Panc1 (cell line): ENCODE measurements at regions of chr5 and their contacts with region 1.

Region 1: DNA sequence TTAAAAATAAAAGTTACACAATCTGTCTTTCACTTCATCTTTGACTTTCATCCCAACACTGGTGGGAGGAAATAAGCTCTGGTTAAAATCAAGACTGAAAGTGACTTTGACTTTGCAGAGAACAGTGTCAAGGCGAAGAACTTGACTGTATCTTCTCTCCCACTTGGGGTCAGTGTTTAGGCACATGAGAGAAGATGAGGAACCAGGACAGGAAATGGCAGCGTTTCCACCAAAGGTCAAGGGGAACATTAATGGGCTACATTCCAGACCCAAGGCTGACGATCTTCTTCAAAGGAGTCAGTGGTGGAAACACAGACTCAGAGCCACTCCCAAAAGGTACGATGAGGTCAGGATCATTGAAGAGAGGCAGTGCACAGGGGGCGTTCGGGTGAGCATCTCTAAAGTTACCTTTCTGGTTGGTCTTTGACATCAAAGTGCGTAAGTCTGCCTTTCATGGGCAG is 409.6 kb downstream of the ARHGEF28 start:
- DNase-seq: peak; percentile 22
- ATAC-seq: peak; percentile 64
- H3K4me3 ChIP-seq: no peak overlapping the region
- H3K27ac ChIP-seq: no peak overlapping the region
- H3K4me1 ChIP-seq: peaks cover 7% of the 10 kb centered on the region; the same call in 1 of the 2 replicates
- H3K27me3 ChIP-seq: no peaks in the 10 kb centered on the region
- CTCF ChIP-seq: peak; percentile 61

Region 2: GRCh38 chr5:73902327-73903051 is 133.1 kb before region 1 on chr5:
- CTCF ChIA-PET with region 1: no interaction called
- POLR2A ChIA-PET with region 1: no interaction called
- in situ Hi-C with region 1: no loop called
- intact Hi-C with region 1: loop called (anchors 10 kb)
- DNase-seq: peak; percentile 25
- ATAC-seq: no peak
- H3K4me3 ChIP-seq: no peak overlapping the region
- H3K27ac ChIP-seq: no peak overlapping the region
- H3K4me1 ChIP-seq: peaks cover 11% of the 10 kb centered on the region
- H3K27me3 ChIP-seq: no peaks in the 10 kb centered on the region
- CTCF ChIP-seq: peak; percentile 80

Region 3: DNA sequence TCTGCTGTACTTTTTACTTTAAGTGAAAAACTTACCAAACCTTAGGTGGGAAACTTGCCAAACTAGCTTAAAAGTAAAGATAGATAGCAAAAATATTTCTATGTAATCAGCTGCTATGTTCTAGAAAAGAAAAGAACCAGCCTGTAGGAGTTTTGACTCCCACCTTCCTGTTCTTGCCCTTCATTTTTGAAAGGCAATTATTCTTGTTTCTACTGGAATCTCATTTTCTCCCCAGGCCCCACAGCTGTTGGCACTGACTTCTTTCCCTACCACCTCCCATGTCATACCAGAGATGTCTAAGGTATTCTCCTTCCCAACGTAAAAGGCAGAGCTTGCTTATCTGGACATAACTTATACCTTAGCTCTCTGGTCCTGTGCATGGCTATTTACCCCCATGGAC is 19.8 kb before region 1 on chr5:
- CTCF ChIA-PET with region 1: no interaction called
- POLR2A ChIA-PET with region 1: interaction called, 15 read pairs
- in situ Hi-C with region 1: no loop called
- intact Hi-C with region 1: no loop called
- DNase-seq: no peak
- ATAC-seq: no peak
- H3K4me3 ChIP-seq: no peak overlapping the region
- H3K27ac ChIP-seq: no peak overlapping the region
- H3K4me1 ChIP-seq: peaks cover 16% of the 10 kb centered on the region
- H3K27me3 ChIP-seq: no peaks in the 10 kb centered on the region
- CTCF ChIP-seq: no peak